Posterior vena cava (tissue), 2 donors: ENCODE measurements at regions of chr12 and their contacts with region 1.

Region 1: GRCh38 chr12:118082161-118082560 is 21.2 kb upstream of the WSB2 start:
- DNase-seq: no peak

Region 2: DNA sequence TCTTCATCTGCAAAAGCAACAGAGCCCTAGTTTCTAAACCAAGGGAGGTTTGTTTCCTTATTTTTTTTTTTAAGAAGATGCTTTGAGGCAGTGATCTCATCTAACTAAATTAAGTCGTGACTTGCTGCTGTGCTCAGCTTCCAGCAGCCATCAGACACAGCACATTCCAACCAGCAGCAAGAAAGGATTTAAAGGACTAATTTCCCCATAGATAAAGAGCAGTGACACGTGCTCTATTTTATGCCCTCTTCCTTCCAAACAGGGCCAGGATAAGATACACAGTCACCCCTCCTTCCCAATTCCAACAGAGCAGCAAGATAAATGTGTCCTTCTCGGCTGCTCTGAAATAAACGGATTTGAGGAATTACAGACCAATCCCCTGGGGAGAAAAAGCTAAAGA is 1667.5 kb after region 1 on chr12:
- intact Hi-C with region 1: loop called in 1 of 2 experiments (anchors 5 kb)
- DNase-seq: no peak